CD8-positive, alpha-beta T cell (primary cell): ENCODE measurements at regions of chr6 and their contacts with region 1.

Region 1: DNA sequence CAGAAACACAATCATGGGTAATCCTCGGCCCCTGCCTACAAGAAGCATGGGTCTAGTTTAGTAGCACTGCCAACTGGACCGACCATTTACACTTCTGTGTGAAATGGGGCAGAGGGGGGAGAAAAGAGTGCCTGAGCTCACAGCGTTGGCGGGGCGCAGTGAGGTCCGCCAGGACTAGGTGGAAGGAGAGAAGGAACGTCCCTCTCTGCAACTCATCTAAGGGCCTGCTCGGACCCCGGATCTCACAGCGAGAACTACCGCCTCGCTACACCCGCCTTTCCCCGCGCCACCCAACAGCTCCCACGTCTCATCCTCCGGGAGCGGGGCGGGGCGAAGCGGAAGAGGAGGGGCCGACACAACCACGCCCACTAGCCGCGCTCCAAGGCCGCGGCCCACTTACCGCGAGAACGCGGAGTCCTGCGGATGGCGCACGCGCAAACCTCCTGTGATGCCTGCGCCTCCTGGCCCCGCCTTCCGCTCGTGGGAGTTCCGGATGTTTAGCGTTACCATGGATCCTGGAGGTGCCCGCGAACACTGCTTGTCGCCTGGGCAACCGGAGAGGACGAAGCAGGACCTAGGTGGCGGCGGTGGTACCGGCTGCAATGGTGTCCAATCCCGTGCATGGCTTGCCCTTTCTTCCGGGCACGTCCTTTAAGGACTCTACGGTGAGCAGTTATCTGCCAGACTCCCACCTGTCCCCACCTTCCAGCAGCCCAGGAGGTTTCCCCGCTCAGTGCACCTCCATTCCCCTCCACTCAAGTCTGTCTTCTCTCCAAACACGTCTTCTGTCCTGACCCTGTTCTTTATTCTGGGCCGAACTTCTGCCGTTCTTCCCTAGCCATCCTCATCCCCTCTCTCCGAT is at the start of gene EFHC1:
- DNase-seq: peak; percentile 96 to 99 (median 98)
- ATAC-seq: peak; percentile 91
- H3K4me3 ChIP-seq: peak within 1 kb of the TSS; percentile 73 to 81
- H3K4me3 Mint-ChIP-seq: no peak within 1 kb of the TSS
- H3K27ac ChIP-seq: peak within 1 kb of the TSS; percentile 70 to 87
- H3K27ac Mint-ChIP-seq: peak within 1 kb of the TSS; percentile 69
- H3K4me1 ChIP-seq: peaks cover 19% of the 10 kb centered on the region
- H3K4me1 Mint-ChIP-seq: peaks cover 24% of the 10 kb centered on the region
- H3K27me3 ChIP-seq: no peaks in the 10 kb centered on the region
- H3K27me3 Mint-ChIP-seq: no peaks in the 10 kb centered on the region
- CTCF ChIP-seq: no peak
- total RNA-seq, gene EFHC1: 5.1 to 6.9 TPM

Region 2: GRCh38 chr6:52361945-52362442 is 58.0 kb before region 1 on chr6 and contains the start of gene PAQR8:
- CTCF ChIA-PET with region 1: interaction called, 10 read pairs
- POLR2A ChIA-PET with region 1: interaction called, 3 read pairs
- intact Hi-C with region 1: loop called in 1 of 2 experiments (anchors 1 kb)
- DNase-seq: peak; percentile 62 to 93 (median 80)
- ATAC-seq: peak; percentile 88
- H3K4me3 ChIP-seq: peak within 1 kb of the TSS; percentile 94 to 99
- H3K4me3 Mint-ChIP-seq: peak within 1 kb of the TSS; percentile 99
- H3K27ac ChIP-seq: peak within 1 kb of the TSS; percentile 72 to 86
- H3K27ac Mint-ChIP-seq: peak within 1 kb of the TSS; percentile 96
- H3K4me1 ChIP-seq: peaks cover 35% of the 10 kb centered on the region
- H3K4me1 Mint-ChIP-seq: peaks cover 44% of the 10 kb centered on the region
- H3K27me3 ChIP-seq: no peaks in the 10 kb centered on the region
- H3K27me3 Mint-ChIP-seq: no peaks in the 10 kb centered on the region
- CTCF ChIP-seq: no peak
- total RNA-seq, gene PAQR8: 1.8 to 2.2 TPM

Region 3: GRCh38 chr6:52399511-52400312 is 20.3 kb before region 1 on chr6:
- CTCF ChIA-PET with region 1: interaction called, 69 read pairs
- POLR2A ChIA-PET with region 1: interaction called, 5 read pairs
- intact Hi-C with region 1: loop called in 1 of 2 experiments (anchors 2 kb)
- DNase-seq: peak in 6 of 9 experiments; percentile 25 to 76 (median 52)
- ATAC-seq: peak; percentile 52
- H3K4me3 ChIP-seq: no peak overlapping the region
- H3K4me3 Mint-ChIP-seq: peak overlapping the region; percentile 53
- H3K27ac ChIP-seq: peak overlapping the region; percentile 45 to 75
- H3K27ac Mint-ChIP-seq: peak overlapping the region; percentile 93
- H3K4me1 ChIP-seq: peaks cover 71% of the 10 kb centered on the region
- H3K4me1 Mint-ChIP-seq: peaks cover 82% of the 10 kb centered on the region
- H3K27me3 ChIP-seq: no peaks in the 10 kb centered on the region
- H3K27me3 Mint-ChIP-seq: no peaks in the 10 kb centered on the region
- CTCF ChIP-seq: peak; percentile 96

Region 4: GRCh38 chr6:52577022-52577777 is 157.2 kb after region 1 on chr6 and contains the start of gene TRAM2:
- CTCF ChIA-PET with region 1: interaction called, 4 read pairs
- POLR2A ChIA-PET with region 1: interaction called, 6 read pairs
- intact Hi-C with region 1: loop called (anchors 1 kb)
- DNase-seq: peak; percentile 62 to 89 (median 77)
- ATAC-seq: peak; percentile 78
- H3K4me3 ChIP-seq: peak within 1 kb of the TSS; percentile 81 to 82
- H3K4me3 Mint-ChIP-seq: peak within 1 kb of the TSS; percentile 87
- H3K27ac ChIP-seq: peak within 1 kb of the TSS; percentile 58
- H3K27ac Mint-ChIP-seq: peak within 1 kb of the TSS; percentile 87
- H3K4me1 ChIP-seq: peaks cover 44% of the 10 kb centered on the region
- H3K4me1 Mint-ChIP-seq: peaks cover 49% of the 10 kb centered on the region
- H3K27me3 ChIP-seq: no peaks in the 10 kb centered on the region
- H3K27me3 Mint-ChIP-seq: no peaks in the 10 kb centered on the region
- CTCF ChIP-seq: no peak
- total RNA-seq, gene TRAM2: 4.6 to 4.9 TPM

Region 5: GRCh38 chr6:52664186-52664990 is 244.3 kb after region 1 on chr6:
- CTCF ChIA-PET with region 1: interaction called, 40 read pairs
- POLR2A ChIA-PET with region 1: no interaction called
- intact Hi-C with region 1: loop called (anchors 1 kb)
- DNase-seq: peak; percentile 5 to 70 (median 45)
- ATAC-seq: peak; percentile 66
- H3K4me3 ChIP-seq: peak overlapping the region; percentile 61 to 82
- H3K4me3 Mint-ChIP-seq: no peak overlapping the region
- H3K27ac ChIP-seq: no peak overlapping the region
- H3K27ac Mint-ChIP-seq: no peak overlapping the region
- H3K4me1 ChIP-seq: peaks cover 14% of the 10 kb centered on the region
- H3K4me1 Mint-ChIP-seq: no peaks in the 10 kb centered on the region
- H3K27me3 ChIP-seq: peaks cover 0 to 10% of the 10 kb centered on the region in 2 experiments
- H3K27me3 Mint-ChIP-seq: no peaks in the 10 kb centered on the region
- CTCF ChIP-seq: no peak

Region 6: DNA sequence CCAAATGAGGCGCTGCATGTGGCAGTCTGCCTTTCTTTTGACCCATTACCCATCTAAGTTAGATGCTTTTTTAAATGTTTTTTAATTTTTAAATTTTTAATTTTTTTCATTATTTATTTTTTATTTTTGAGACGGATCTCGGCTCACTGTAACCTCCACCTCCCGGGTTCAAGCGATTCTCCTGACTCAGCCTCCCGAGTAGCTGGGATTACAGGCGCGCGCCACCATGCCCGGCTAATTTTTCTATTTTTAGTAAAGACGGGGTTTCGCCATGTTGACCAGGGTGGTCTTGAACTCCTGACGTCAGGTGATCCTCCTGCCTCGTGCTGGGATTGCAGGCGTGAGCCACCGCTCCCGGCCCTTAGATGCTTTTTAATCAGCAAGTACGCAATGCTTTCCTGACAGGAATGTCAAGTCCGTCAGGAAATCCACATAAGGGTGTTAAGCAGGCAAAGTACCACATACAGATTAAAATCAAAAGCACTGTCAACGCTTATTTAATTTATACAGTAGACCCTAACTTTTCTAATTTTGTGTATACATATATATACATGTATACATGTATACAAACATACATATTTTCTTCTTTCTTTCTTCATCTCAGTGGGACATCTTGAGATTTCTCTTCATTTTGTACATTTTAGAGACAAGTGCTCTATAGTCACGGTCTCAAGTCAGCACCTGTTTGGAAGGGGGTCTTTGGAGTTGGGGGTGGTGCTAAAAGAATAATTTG is 576.0 kb after region 1 on chr6:
- CTCF ChIA-PET with region 1: no interaction called
- POLR2A ChIA-PET with region 1: no interaction called
- intact Hi-C with region 1: loop called in 1 of 2 experiments (anchors 5 kb)
- DNase-seq: peak in 7 of 9 experiments; percentile 27 to 74 (median 54)
- ATAC-seq: peak; percentile 8
- H3K4me3 ChIP-seq: peak overlapping the region; percentile 41 to 75
- H3K4me3 Mint-ChIP-seq: peak overlapping the region; percentile 94
- H3K27ac ChIP-seq: peak overlapping the region; percentile 57 to 100
- H3K27ac Mint-ChIP-seq: peak overlapping the region; percentile 99
- H3K4me1 ChIP-seq: peaks cover 6% of the 10 kb centered on the region
- H3K4me1 Mint-ChIP-seq: peaks cover 22% of the 10 kb centered on the region
- H3K27me3 ChIP-seq: no peaks in the 10 kb centered on the region
- H3K27me3 Mint-ChIP-seq: peaks cover 7% of the 10 kb centered on the region
- CTCF ChIP-seq: no peak

Region 7: GRCh38 chr6:53070806-53071205 is 650.8 kb after region 1 on chr6:
- CTCF ChIA-PET with region 1: no interaction called
- POLR2A ChIA-PET with region 1: no interaction called
- intact Hi-C with region 1: no loop called
- DNase-seq: peak in 2 of 9 experiments; percentile 30 to 46
- ATAC-seq: peak; percentile 43
- H3K4me3 ChIP-seq: no peak overlapping the region
- H3K4me3 Mint-ChIP-seq: no peak overlapping the region
- H3K27ac ChIP-seq: no peak overlapping the region
- H3K27ac Mint-ChIP-seq: no peak overlapping the region
- H3K4me1 ChIP-seq: peaks cover 16% of the 10 kb centered on the region
- H3K4me1 Mint-ChIP-seq: peaks cover 43% of the 10 kb centered on the region
- H3K27me3 ChIP-seq: no peaks in the 10 kb centered on the region
- H3K27me3 Mint-ChIP-seq: no peaks in the 10 kb centered on the region
- CTCF ChIP-seq: no peak

Region 8: DNA sequence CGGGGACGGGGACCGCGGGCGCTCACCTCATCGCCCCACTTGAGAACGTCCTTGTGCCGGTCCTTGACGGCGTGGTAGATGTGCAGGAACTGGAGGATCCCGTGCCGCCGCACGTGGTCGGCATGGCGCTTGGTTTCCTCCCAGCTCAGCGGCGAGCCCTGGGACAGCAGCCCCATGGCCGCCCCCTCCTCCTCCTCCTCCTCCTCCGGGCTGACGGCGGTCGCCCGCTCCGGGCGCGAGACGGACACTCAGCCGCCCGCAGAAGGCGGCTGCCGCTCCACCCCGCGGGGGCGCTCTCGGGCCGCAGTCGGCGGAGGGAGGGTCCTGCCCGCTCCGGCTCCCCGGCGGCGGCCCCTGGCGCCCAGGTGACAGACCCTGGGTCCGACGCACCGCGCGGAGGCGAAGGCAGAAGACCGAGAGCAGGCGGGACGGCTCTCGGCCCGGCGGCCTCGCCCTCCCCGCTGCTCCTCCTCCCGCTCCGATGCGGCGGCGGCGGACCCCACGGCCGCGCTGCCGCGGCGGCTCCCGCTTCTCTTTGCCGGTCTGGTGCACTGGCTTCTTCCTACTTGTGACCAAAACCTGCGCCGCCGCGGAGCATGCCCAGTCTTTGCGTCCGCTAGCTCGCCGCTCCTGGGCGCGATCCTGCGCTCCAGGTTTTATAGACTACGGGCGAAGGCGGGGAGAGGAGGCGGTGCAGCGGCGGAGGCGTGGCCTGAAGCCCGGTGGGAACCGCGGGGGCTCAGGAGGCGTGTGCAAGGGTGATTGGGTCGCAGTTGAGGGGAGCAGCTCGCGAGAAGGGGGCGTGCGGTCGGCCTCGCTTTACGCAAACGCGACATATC is 1124.6 kb after region 1 on chr6 and contains the start of gene GCLC:
- CTCF ChIA-PET with region 1: no interaction called
- POLR2A ChIA-PET with region 1: no interaction called
- intact Hi-C with region 1: loop called in 1 of 2 experiments (anchors 2 kb)
- DNase-seq: peak; percentile 75 to 95 (median 87)
- ATAC-seq: peak; percentile 67
- H3K4me3 ChIP-seq: peak within 1 kb of the TSS; percentile 69 to 79
- H3K4me3 Mint-ChIP-seq: peak within 1 kb of the TSS; percentile 99
- H3K27ac ChIP-seq: peak within 1 kb of the TSS; percentile 48 to 62
- H3K27ac Mint-ChIP-seq: peak within 1 kb of the TSS; percentile 89
- H3K4me1 ChIP-seq: peaks cover 39% of the 10 kb centered on the region
- H3K4me1 Mint-ChIP-seq: peaks cover 68% of the 10 kb centered on the region
- H3K27me3 ChIP-seq: no peaks in the 10 kb centered on the region
- H3K27me3 Mint-ChIP-seq: no peaks in the 10 kb centered on the region
- CTCF ChIP-seq: peak; percentile 80
- total RNA-seq, gene GCLC: 13.1 to 13.6 TPM